ENCODE measurements at regions of chr12 and their contacts with region 1.

Region 1: DNA sequence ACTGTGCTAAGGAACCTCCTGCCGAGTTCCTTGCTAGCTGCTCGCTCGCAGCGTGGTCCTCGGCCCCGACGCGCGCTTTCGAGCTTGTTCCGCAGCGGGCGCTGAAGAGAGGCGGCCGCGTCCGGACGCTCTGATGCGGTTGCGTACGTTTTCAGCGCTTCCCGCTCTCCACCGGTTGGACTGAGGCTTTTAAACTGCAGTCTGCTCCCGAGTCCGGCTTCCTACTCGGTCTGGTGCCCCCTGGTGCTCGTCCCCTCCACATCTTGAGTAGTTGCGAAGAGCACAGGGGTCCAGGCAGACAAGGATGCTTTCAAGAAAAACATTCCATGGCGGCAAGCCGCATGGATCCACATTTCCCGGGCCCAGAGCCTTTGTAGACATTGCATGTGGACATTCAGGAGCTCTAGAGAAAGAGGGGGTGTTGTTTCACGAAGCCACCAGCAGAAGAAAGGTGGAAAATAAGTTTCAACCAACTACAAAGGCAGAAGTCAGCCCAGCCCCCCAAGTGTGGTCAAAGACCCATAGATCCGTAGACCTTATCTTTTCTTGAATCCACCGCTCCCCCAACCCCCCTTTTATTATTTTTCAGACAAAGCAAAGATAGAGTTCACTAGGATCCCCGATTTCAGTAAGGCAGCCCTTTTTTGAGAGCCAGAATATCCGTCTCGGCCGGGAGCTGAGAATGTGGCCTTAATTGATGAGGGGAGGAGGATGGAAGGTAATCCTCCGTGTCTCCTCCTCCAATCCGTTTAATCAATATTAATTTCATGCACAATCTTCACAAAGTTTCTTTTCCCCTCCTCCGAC is 984 bp upstream of the WNK1 start:
- DNase-seq: peak; percentile 88
- H3K4me3 ChIP-seq: peak overlapping the region in 2 of 3 donors; percentile 6 to 96
- H3K27ac ChIP-seq: peak overlapping the region; percentile 66 to 98 (median 72)
- H3K4me1 ChIP-seq: peaks cover 17 to 19% of the 10 kb centered on the region in 2 donors
- H3K27me3 ChIP-seq: no peaks in the 10 kb centered on the region
- CTCF ChIP-seq: peak in 5 of 6 experiments; percentile 39 to 72 (median 62)
- POLR2A ChIP-seq: peak in 1 of 2 donors; percentile 63

Region 2: DNA sequence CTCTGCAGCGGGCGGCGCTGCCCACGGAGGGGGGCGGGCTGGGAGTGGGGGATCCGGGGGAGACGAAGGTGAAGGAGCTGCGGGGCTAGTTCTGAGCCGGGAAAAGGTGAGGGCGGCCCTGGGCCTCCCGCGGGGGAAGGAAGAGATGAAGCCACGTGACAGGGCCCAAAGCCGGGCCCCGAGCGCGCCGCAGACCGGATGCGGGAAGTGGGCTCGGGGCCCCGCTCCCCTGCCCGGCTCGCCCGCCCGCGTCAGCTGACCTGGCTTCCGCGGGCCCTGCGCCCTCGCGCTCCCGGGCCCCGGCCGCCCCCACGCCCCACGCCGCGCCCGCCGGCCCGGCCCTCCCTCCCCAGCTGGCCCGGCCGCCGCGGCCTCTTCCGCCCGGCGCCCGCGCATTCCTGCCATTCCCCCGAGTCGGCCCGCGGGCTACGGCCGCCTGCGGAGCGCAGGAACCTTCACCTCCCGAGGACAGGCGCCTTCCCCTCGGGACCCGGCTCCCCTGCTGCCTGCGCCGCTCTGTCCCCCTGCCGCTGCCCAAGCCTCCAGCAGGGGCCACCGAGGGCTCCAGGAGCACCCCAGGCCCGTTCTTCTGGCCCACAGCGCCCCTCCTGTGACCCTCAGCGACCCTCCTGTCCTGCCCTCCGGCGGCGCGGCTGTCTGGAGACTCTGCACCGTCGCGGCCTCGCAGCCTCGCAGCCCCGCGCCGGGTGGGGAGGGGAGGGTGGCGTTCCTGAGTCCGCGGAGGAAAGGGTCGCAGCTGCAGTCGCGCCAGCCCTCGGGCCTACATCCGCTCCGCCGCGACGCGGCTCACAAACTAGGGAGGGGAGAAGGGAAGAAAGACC is 108.5 kb before region 1 on chr12:
- intact Hi-C with region 1: loop called (anchors 10 kb)
- DNase-seq: peak; percentile 81 to 83
- H3K4me3 ChIP-seq: peak overlapping the region in 2 of 3 donors; percentile 6 to 45
- H3K27ac ChIP-seq: peak overlapping the region; percentile 93 to 99 (median 99)
- H3K4me1 ChIP-seq: peaks cover 30 to 43% of the 10 kb centered on the region in 2 donors
- H3K27me3 ChIP-seq: no peaks in the 10 kb centered on the region
- CTCF ChIP-seq: peak in 5 of 6 experiments; percentile 5 to 41 (median 10)
- POLR2A ChIP-seq: peak in 1 of 2 donors; percentile 61

Region 3: DNA sequence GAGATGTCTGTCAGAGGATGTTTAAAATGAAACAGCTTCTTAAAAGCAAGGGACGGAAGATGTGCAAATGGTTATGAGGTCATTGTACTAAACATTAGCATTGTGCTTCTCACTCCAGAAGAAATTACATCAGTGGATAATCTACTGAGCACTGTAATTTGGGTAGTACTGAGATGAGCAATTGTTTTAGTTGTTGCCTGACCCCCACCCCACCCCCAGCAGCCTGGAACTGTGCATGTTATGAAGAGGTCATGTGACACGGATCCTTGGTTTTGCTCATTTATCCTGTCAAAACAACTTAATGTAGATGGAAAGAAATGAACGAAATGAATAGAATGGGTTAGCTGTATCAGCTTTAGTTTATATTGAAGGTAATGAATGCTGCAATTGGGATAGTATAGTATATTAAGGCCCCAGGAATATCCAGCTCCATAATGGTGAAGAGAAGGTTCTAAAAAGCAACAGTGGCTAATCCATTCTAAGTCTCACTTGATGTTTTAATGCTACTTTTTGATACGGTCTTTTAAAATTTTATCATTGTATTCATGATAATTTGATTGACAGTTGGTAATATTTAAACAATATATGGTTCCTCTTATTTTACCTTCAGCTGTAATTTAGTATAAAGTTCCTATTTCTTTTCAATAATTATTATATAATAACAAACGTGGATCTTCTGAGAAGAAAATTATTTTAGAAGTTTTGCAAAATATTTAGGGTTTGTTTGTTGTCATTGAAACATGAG is 59.4 kb after region 1 on chr12:
- intact Hi-C with region 1: loop called (anchors 10 kb)
- DNase-seq: no peak
- H3K4me3 ChIP-seq: no peak overlapping the region
- H3K27ac ChIP-seq: no peak overlapping the region
- H3K4me1 ChIP-seq: peaks cover 7 to 15% of the 10 kb centered on the region in 2 donors
- H3K27me3 ChIP-seq: no peaks in the 10 kb centered on the region
- CTCF ChIP-seq: no peak
- POLR2A ChIP-seq: no peak